Activated CD4-positive, alpha-beta T cell treated with anti-CD3 and anti-CD28 coated beads for 36 hours (primary cell): ENCODE measurements at regions of chr12 and their contacts with region 1.

Region 1: DNA sequence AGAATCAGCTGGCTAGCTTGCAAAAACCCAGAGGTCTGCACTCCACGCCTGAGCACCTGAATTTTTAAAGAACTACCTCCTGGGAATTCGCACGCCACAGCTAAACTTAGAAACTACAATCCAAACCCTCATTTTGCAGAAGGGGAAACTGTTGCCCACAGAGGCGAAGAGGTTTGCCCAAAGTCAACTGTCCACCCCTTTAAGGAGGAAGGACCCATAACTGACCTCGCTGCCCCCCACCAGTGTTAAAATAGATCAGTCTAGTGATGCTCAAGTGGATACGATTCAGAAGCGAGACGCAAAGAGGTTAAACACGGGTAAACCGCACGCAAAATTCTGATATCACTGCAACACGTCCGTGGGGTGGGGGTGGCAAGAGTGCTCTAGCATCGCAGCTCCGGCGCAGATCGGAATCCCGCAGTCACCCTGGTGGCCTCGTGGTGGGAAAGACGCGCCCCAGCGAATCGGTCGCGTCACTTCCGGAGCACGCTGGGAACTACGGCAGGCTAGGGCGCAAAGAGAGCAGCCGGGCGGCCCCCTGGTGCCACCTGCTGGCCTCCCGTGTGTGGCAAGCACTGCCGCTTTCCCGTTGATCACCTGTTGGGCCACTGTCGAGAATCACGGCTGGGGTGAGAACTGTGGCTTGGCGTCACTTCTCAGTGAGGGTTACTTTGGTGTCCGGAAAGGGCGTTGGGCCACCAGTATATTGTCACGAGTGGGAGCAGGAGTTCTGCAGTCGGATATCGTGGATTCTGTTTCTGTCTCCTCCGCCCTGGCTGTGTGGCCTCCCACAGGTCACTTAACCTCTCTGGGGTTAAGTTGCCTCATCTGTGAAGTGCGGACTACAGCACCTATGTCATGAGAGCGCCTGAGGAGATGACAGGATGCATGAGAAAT is at the start of gene ALKBH2:
- DNase-seq: peak; percentile 97
- ATAC-seq: peak; percentile 74
- H3K4me3 Mint-ChIP-seq: peak within 1 kb of the TSS; percentile 86
- H3K27ac Mint-ChIP-seq: peak within 1 kb of the TSS; percentile 90
- H3K4me1 Mint-ChIP-seq: peaks cover 30% of the 10 kb centered on the region
- H3K27me3 Mint-ChIP-seq: no peaks in the 10 kb centered on the region
- total RNA-seq, gene ALKBH2: 32.1 to 33.3 TPM

Region 2: GRCh38 chr12:108562348-108563135 is 530.7 kb before region 1 on chr12 and contains the start of gene ISCU:
- CTCF ChIA-PET with region 1: no interaction called
- POLR2A ChIA-PET with region 1: no interaction called
- intact Hi-C with region 1: loop called (anchors 1 to 2 kb)
- DNase-seq: peak; percentile 99
- ATAC-seq: peak; percentile 57
- H3K4me3 Mint-ChIP-seq: peak within 1 kb of the TSS; percentile 100
- H3K27ac Mint-ChIP-seq: peak within 1 kb of the TSS; percentile 100
- H3K4me1 Mint-ChIP-seq: peaks cover 48% of the 10 kb centered on the region
- H3K27me3 Mint-ChIP-seq: no peaks in the 10 kb centered on the region
- total RNA-seq, gene ISCU: 67.3 to 83.8 TPM

Region 3: GRCh38 chr12:108731105-108731865 is 362.0 kb before region 1 on chr12 and contains the start of gene CORO1C:
- CTCF ChIA-PET with region 1: no interaction called
- POLR2A ChIA-PET with region 1: no interaction called
- intact Hi-C with region 1: loop called in 1 of 2 experiments (anchors 1 kb)
- DNase-seq: peak; percentile 98
- ATAC-seq: peak; percentile 78
- H3K4me3 Mint-ChIP-seq: peak within 1 kb of the TSS; percentile 88
- H3K27ac Mint-ChIP-seq: peak within 1 kb of the TSS; percentile 93
- H3K4me1 Mint-ChIP-seq: peaks cover 36% of the 10 kb centered on the region
- H3K27me3 Mint-ChIP-seq: no peaks in the 10 kb centered on the region
- total RNA-seq, gene CORO1C: 83.5 to 90.8 TPM

Region 4: GRCh38 chr12:108890212-108890611 is 203.1 kb before region 1 on chr12:
- CTCF ChIA-PET with region 1: interaction called, 13 read pairs
- POLR2A ChIA-PET with region 1: no interaction called
- intact Hi-C with region 1: no loop called
- DNase-seq: peak; percentile 30
- ATAC-seq: no peak
- H3K4me3 Mint-ChIP-seq: no peak overlapping the region
- H3K27ac Mint-ChIP-seq: no peak overlapping the region
- H3K4me1 Mint-ChIP-seq: no peaks in the 10 kb centered on the region
- H3K27me3 Mint-ChIP-seq: peaks cover 2% of the 10 kb centered on the region

Region 5: GRCh38 chr12:109110988-109111495 is 17.8 kb after region 1 on chr12:
- CTCF ChIA-PET with region 1: interaction called, 32 read pairs
- POLR2A ChIA-PET with region 1: interaction called, 11 read pairs
- intact Hi-C with region 1: loop called in 1 of 2 experiments (anchors 1 kb)
- DNase-seq: peak; percentile 74
- ATAC-seq: peak; percentile 86
- H3K4me3 Mint-ChIP-seq: peak overlapping the region; percentile 69
- H3K27ac Mint-ChIP-seq: peak overlapping the region; percentile 37
- H3K4me1 Mint-ChIP-seq: peaks cover 29% of the 10 kb centered on the region
- H3K27me3 Mint-ChIP-seq: no peaks in the 10 kb centered on the region

Region 6: DNA sequence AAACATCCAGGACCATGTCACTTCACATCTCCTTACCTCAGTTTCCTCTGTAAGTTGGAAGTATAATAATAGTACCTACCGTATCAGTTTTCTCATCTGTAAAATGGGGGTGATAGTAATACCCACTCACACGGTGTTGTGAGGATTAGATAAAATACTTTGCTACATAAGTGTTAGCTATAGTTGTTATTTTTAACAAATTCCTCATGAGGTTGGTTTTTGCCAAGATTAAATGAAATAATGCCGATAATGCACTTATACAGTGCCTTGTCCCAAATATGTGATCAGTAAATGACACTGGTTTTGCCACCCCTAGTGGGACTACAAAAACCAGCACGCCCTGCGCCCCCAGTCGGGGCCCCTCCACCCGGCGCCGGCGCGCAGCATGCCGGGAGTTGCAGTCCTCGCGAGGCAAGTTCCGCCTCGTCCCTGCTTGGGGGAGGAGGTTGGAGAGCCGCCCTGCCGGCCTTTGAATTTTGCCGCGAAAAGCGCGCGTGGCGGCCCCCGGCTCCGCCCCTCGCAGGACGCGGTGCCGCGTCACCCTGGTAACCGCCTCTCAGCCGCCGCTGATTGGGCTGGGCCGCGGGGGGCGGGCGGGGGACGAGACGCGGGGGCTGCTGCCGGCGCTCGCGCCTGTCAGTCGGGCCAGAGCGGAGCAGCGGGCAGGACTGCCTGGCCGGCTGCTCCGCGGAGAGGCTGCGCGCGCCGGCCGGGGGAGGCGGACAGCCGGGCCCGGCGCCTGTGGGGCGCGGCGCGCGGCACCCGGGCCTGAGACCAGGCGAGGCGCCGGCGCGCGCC is 620.1 kb after region 1 on chr12 and contains the start of gene FAM222A:
- CTCF ChIA-PET with region 1: no interaction called
- POLR2A ChIA-PET with region 1: no interaction called
- intact Hi-C with region 1: loop called in 1 of 2 experiments (anchors 1 kb)
- DNase-seq: peak; percentile 97
- ATAC-seq: peak; percentile 95
- H3K4me3 Mint-ChIP-seq: peak within 1 kb of the TSS; percentile 56
- H3K27ac Mint-ChIP-seq: no peak within 1 kb of the TSS
- H3K4me1 Mint-ChIP-seq: peaks cover 4% of the 10 kb centered on the region
- H3K27me3 Mint-ChIP-seq: peaks cover 25% of the 10 kb centered on the region
- total RNA-seq, gene FAM222A: 0.39 to 0.53 TPM